AG04449 (cell line): ENCODE measurements at regions of chr1 and their contacts with region 1.

Region 1: DNA sequence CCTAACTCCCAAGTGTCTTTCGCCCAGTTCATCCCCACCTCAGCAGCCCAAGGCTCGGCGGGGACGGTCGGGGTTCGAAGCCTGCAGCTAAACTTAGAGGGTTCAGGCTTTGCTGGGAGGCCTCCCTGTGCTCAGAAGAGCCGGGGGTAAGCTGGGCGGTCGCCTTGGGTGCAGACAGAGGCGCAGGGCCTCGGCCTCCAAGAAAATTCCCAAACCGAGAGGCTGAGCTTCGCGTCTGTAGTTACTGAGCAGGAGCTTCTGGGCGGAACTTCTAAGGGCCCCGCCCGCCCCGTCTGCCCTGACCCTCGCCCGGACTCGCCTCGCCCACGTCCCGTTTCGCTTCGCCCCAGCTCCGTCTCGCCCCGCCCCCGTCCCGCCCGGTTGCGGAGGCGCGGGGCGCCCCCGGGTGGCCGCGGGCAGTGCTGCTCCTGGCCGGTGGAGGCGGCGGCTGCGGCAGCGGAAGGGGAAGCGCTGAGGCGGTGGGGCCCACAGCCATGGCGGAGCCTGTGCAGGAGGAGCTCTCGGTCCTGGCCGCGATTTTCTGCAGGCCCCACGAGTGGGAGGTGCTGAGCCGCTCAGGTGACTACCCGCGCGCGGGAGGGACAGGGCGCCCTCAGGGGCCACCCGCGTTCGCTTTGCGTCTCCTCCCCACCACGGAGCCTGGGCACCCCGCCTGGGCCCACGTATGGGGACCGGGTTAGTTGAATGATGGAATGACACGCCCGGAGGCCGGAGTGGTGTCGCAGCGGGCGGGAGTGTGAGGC is at the start of gene RWDD3:
- DNase-seq: peak; percentile 31
- H3K4me3 ChIP-seq: peak within 1 kb of the TSS; percentile 90
- CTCF ChIP-seq: peak; percentile 68

Region 2: DNA sequence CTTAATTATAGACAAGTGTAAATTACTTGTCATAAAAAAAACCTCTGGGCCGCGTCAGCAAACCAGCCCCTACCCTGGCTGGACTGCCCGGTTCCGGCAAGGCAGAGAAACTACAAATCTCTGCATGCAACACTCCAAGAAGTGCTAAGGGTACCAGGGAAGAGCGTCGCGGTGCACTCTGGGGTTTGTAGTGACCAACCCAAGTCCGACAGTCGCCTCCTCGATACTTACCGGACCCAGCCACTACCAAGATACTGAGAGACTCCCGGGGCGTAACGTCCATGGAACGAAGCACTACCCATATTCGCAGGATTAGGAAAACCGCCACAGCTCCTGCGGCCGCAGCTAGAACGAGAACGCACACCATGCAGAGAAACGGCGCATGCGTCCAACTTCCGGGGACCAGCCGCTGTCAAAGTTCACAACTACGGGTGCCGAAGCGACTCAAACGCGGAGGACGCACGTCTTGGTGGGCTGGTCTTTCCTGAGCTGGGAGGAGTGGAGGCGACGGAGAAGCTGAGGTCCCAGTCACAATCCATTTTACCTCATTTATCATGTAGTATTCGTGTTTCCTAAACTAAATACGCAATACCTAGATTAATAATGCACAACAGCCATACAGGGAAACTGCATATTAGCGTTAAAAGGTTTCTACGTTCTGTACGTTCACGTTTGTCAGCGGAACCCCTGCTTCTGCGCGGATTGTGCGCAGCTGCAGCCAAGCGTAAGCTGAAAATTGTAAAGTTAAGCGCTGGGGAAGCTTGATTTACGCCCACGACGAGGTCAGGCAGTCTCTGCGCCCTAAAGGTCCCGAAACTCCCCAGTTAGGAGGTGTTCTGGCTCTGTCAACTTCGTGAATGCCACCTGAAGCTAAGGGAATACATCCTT is 161.1 kb before region 1 on chr1 and contains the start of gene ALG14:
- CTCF ChIA-PET with region 1: interaction called, 12 read pairs
- POLR2A ChIA-PET with region 1: interaction called, 10 read pairs
- DNase-seq: peak; percentile 80
- H3K4me3 ChIP-seq: peak within 1 kb of the TSS; percentile 96
- CTCF ChIP-seq: no peak

Region 3: GRCh38 chr1:95084317-95085176 is 149.4 kb before region 1 on chr1:
- CTCF ChIA-PET with region 1: interaction called, 13 read pairs
- POLR2A ChIA-PET with region 1: no interaction called
- DNase-seq: no peak
- H3K4me3 ChIP-seq: no peak overlapping the region
- CTCF ChIP-seq: peak; percentile 34

Region 4: DNA sequence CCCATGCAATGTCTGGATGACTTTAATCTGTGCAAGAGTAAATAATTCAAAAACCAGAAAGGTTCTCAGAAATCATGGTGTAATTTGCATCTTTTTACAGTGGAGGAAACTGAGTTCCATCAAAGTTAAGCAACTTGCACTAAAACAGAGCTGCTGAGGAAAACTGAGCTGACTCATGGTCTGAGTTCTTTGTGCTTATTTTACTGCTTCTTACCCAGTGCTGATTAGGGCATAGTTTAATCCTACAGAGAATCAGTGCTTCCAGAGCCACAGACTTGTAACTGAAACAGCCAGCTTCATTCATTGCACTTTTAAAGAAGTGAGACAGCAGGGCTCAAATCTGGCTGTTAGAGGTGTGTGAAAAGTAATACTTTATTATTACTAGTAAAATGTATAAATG is 10.8 kb before region 1 on chr1:
- CTCF ChIA-PET with region 1: interaction called, 30 read pairs
- POLR2A ChIA-PET with region 1: interaction called, 4 read pairs
- DNase-seq: no peak
- H3K4me3 ChIP-seq: no peak overlapping the region
- CTCF ChIP-seq: no peak

Region 5: DNA sequence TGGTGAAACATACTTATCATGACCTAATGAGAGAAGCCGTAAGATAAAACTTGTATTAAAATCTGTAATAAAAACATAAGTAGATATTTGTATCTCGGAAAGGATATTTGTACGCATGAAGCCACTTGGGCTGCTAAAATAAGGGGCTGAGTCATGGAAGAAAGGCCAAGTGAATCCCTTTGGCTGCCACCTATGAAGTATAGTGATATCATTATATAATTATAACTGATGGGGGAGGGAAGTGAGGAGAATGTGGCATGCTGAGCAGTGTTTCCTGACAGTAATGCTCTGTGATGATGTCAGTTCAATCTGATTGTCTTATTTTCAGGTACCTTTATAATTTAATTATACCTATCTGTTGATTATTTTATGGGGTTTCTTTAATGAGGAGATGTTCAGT is 13.7 kb after region 1 on chr1:
- CTCF ChIA-PET with region 1: interaction called, 45 read pairs
- POLR2A ChIA-PET with region 1: interaction called, 3 read pairs
- DNase-seq: no peak
- H3K4me3 ChIP-seq: no peak overlapping the region
- CTCF ChIP-seq: no peak